AG04449 (cell line): ENCODE measurements at regions of chr9 and their contacts with region 1.

Region 1: DNA sequence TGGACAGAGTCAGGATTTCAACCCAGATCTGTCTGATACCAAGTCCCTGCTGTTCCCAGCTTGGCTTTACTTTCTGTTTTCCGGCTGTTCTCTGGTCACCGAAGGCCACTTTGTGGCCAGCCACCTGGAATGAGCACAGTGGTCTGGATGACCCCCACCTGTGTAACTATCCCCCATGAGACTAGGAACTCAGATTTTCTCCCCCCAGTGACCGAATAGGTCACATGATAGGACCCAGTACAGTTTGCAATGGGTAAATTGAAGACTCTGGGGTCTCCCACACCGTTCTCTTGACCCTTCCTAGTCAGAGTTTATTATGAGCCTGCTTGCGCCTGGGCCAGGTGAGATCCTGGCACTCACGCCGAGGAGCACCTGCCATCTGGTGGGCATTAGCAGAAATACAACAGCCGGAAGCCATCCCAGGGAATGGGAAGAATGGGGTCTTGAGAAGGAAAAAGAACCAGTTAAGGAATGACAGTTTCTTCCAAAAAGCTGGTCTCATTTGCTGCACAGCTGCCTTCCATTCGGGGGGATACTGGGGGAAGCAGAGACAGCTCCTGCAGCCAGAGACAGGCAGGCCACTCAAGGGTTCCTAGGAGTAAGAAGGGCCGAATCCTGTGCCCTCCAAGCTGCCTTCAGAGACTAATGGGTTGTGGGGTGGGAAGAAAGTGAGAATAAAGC is 7.1 kb downstream of the PHYHD1 start:
- DNase-seq: no peak
- H3K4me3 ChIP-seq: no peak overlapping the region
- CTCF ChIP-seq: peak; percentile 83

Region 2: GRCh38 chr9:128733256-128733655 is 194.6 kb before region 1 on chr9:
- CTCF ChIA-PET with region 1: interaction called, 14 read pairs
- POLR2A ChIA-PET with region 1: no interaction called
- DNase-seq: no peak
- H3K4me3 ChIP-seq: no peak overlapping the region
- CTCF ChIP-seq: peak; percentile 70

Region 3: GRCh38 chr9:128863647-128864046 is 64.2 kb before region 1 on chr9:
- CTCF ChIA-PET with region 1: interaction called, 294 read pairs
- POLR2A ChIA-PET with region 1: no interaction called
- DNase-seq: no peak
- H3K4me3 ChIP-seq: no peak overlapping the region
- CTCF ChIP-seq: peak; percentile 95

Region 4: DNA sequence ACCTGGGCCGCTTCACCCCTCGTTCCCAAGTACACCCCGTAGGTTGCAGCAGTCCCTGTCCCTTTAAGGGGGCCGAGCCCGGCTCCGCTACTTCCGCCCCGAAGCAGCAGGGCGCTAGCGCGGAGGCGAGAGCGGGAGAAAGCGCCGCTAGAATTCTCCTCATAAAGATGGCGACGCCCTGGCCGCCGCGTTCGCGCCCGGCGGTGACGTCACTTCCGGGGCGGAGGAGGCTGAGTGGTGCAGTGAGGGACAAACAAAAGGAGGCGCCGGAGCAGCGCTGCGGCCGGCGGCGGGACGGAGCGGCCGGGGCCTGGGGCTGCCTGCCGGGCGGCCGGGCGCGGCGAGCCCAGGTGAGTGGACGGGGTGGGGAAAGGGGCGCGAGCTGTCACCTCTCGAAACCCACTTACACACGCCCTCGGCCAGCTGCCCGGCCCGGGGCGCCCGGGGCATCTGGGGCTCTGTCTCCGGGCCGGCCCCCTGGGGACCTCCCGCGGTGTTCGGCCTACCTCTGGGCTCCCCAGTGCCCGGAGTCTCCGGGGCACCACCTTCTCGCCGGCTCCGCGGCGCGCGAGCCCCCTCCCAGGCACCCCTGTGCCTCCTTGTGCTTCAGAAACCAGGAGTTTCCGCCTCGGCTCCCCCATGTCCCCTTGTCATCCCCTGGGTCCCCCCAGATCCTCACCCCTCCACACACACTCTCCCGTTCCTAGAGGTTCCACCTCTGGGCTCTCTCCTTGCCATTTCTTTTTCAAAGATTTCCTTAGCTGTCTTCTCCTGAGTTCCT is 45.8 kb before region 1 on chr9 and contains the starts of genes KYAT1 and LRRC8A:
- CTCF ChIA-PET with region 1: interaction called, 19 read pairs
- POLR2A ChIA-PET with region 1: interaction called, 3 read pairs
- DNase-seq: peak; percentile 45
- H3K4me3 ChIP-seq: peak within 1 kb of the TSS; percentile 96
- CTCF ChIP-seq: no peak

Region 5: GRCh38 chr9:128911529-128912035 is 16.3 kb before region 1 on chr9:
- CTCF ChIA-PET with region 1: interaction called, 42 read pairs
- POLR2A ChIA-PET with region 1: no interaction called
- DNase-seq: peak; percentile 37
- H3K4me3 ChIP-seq: no peak overlapping the region
- CTCF ChIP-seq: no peak

Region 6: DNA sequence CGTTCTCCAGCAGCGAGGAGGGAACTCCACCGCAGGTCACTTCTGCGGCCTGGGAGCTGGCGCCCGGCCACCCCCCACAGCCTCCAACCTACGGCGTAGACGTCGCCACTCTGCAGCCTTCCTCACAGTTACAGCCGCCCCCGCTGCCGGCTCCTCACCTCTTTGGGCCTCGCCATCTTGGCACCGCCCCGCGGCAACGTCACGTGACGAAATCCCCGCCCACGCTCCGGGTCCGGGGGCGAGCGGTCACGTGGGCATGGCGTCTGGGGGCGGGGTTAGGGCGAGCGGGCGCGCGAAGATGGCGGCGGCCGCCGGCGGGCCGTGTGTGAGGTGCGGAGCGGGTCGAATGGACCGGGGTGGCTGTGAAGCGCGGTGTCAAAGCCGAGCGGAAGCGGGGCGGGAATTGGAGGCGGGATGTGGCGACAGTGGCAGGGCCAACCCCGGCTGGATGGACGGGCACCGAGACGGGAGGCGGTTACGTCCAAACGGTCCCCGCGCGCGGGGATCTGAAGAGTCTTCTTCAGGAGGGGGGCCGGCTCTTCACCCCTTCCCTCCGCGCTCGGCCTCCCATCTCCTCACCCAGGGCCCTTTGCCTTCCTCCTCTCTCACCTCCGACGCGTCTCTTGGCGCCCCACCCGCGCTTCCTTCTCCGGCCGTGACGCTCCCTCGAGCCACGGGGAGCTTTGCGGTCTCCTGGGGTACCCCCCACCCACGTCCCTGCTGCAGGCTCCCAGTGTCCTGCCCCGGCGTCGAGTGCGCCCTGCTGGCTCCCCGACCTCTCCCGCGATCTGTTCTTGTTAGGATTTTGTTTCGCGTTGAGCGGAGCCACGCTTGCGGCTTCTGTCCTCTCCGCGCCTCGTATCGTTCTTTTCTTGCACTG is 19.8 kb after region 1 on chr9 and contains the starts of genes DOLK and NUP188:
- CTCF ChIA-PET with region 1: interaction called, 46 read pairs
- POLR2A ChIA-PET with region 1: interaction called, 3 read pairs
- DNase-seq: peak; percentile 37
- H3K4me3 ChIP-seq: peak within 1 kb of the TSS; percentile 97
- CTCF ChIP-seq: no peak